A673 (cell line): ENCODE measurements at regions of chr4 and their contacts with region 1.

Region 1: DNA sequence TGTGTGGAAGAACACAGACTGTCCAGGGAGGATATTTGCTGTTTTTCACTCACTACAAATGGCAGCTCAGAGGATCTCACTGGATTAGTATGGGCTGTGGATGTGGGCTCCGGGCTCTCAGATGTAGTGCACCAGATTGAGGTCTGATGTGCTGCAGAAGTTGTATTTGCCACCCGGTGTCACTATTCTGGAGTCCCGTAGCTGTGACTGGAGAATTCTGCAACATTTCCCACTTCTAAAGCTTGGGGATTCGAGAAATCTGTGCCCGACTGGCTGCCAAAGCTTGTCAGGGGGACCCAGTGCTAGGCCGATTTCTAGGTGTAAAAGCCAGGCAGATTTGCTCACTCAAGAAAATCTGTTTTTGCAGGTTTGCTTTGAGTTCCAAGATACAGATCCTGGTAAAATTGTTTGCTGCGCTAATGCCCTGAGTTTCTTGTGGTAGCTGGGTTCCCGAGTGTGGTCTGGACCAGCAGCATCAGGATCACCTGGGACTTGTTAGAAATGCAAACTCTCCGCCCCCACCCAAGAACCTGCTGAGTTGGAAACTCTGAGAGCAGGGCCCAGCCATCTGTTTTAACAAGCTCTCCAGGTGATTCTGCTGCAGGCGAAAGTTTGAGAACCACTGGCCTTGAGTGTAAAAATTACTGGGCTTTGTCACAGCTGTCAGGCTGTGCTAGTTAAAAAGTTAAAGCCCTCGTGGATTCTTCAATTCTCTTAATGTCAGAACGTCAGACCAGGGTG is 18.1 kb downstream of the KIT start:
- DNase-seq: peak; percentile 44
- H3K4me3 ChIP-seq: no peak overlapping the region
- H3K27ac ChIP-seq: peak overlapping the region; percentile 93
- H3K4me1 ChIP-seq: peaks cover 62% of the 10 kb centered on the region
- H3K27me3 ChIP-seq: no peaks in the 10 kb centered on the region
- CTCF ChIP-seq: 0 out of 2 replicates have a peak, but pooled peaks have one; percentile 23

Region 2: GRCh38 chr4:54961357-54961975 is 285.6 kb after region 1 on chr4:
- CTCF ChIA-PET with region 1: no interaction called
- POLR2A ChIA-PET with region 1: no interaction called
- intact Hi-C with region 1: loop called (anchors 2 kb)
- DNase-seq: peak; percentile 30
- H3K4me3 ChIP-seq: no peak overlapping the region
- H3K27ac ChIP-seq: no peak overlapping the region
- H3K4me1 ChIP-seq: no peaks in the 10 kb centered on the region
- H3K27me3 ChIP-seq: no peaks in the 10 kb centered on the region
- CTCF ChIP-seq: peak; percentile 61